ENCODE measurements at regions of chr20 and their contacts with region 1.

Region 1: GRCh38 chr20:38434743-38435554 is at the start of gene SNHG17:
- DNase-seq: peak; percentile 97
- H3K4me3 ChIP-seq: peak within 1 kb of the TSS; percentile 73
- H3K4me3 Mint-ChIP-seq: peak within 1 kb of the TSS; percentile 94
- H3K27ac Mint-ChIP-seq: peak within 1 kb of the TSS; percentile 95
- H3K4me1 ChIP-seq: peaks cover 10% of the 10 kb centered on the region
- H3K4me1 Mint-ChIP-seq: peaks cover 16% of the 10 kb centered on the region
- H3K27me3 ChIP-seq: no peaks in the 10 kb centered on the region
- H3K27me3 Mint-ChIP-seq: peaks cover 6% of the 10 kb centered on the region
- CTCF ChIP-seq: peak; percentile 100
- total RNA-seq, gene SNHG17: 351 and 362 TPM in 2 replicates

Region 2: DNA sequence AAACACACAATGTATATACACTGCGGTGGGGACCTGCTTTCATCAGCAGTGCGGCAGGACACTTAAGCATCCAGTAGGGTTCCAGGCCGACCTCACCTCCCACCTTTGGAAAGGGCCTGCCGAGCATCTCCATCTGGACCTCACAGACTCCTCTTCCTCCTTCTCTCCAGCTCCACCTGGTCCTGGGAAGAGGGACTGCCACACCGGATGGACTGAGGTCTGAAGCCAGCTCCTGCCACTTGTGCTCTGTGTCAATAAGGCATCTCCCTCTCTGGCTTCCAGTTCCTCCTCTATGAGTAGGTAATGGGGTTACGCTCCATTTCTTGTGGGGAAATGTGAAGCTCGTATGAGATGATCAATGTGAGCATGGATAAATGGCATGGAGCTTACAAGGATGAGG is 933.0 kb before region 1 on chr20:
- CTCF ChIA-PET with region 1: interaction called, 10 read pairs
- POLR2A ChIA-PET with region 1: no interaction called
- intact Hi-C with region 1: no loop called
- DNase-seq: peak; percentile 58 to 74
- H3K4me3 ChIP-seq: no peak overlapping the region
- H3K4me3 Mint-ChIP-seq: no peak overlapping the region
- H3K27ac Mint-ChIP-seq: no peak overlapping the region
- H3K4me1 ChIP-seq: peaks cover 7% of the 10 kb centered on the region
- H3K4me1 Mint-ChIP-seq: no peaks in the 10 kb centered on the region
- H3K27me3 ChIP-seq: no peaks in the 10 kb centered on the region
- H3K27me3 Mint-ChIP-seq: no peaks in the 10 kb centered on the region
- CTCF ChIP-seq: peak in 1 of 2 experiments; percentile 49

Region 3: DNA sequence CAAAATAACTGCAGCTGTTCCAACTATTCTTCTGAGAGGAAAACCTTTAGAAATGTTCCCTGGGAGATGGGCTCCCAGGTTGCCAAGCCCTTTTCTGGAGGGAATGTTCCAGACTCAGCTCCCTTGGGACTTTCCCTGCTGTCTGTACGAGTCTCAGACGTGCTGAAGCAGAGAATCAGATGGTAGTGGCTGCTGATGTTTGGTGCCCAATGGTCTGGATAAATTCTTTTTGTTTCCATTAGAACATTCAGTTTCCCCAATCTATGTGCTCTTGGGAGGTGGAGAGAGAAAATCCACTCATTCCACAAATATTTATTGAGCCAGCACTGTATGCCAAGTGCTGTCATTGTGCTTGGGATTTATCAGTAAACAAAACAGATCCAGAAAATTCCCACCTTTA is 39.8 kb before region 1 on chr20:
- CTCF ChIA-PET with region 1: no interaction called
- POLR2A ChIA-PET with region 1: no interaction called
- intact Hi-C with region 1: no loop called
- DNase-seq: no peak
- H3K4me3 ChIP-seq: no peak overlapping the region
- H3K4me3 Mint-ChIP-seq: no peak overlapping the region
- H3K27ac Mint-ChIP-seq: no peak overlapping the region
- H3K4me1 ChIP-seq: no peaks in the 10 kb centered on the region
- H3K4me1 Mint-ChIP-seq: no peaks in the 10 kb centered on the region
- H3K27me3 ChIP-seq: no peaks in the 10 kb centered on the region; the same call in 1 of the 2 replicates
- H3K27me3 Mint-ChIP-seq: no peaks in the 10 kb centered on the region
- CTCF ChIP-seq: no peak

Region 4: DNA sequence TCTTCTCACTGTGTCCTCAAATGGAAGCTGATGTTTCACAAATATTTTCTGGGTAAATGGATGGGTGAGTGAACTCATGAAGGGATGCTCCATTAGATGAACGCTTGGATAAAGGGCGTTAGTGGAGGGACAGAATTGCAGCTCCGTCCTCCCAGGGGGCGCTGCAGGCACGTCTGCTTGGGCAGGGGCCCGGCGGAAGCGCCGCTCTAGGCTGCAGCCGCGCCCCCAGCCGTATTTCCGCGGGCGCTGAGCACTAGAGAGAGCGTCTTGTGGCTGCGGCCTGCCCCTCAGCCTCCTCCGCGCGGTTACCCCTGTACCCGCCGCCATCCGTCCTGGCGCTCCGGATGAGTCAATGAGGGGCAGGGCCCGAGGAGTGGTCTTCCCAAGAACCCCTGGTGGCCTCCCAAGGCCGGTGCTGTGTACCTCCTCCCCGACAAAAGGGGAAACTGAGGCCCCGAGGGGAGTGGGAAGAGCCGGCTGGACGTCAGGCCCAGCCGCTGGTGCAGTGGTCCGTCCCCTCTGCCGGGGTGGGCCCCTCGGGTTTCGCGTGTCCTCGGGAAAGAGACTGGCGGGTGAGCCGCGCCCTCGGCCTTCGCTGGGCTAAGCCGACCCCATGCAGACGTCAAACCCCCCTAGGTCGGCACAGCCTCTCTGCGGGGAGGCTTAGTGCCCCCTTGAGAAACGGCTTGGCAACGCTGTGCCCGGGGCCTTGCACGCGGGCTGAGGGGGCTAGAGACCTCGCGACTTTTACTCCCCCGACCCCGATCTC is 11.7 kb after region 1 on chr20:
- CTCF ChIA-PET with region 1: interaction called, 91 read pairs
- POLR2A ChIA-PET with region 1: interaction called, 101 read pairs
- intact Hi-C with region 1: loop called (anchors 1 kb)
- DNase-seq: peak; percentile 96 to 100
- H3K4me3 ChIP-seq: peak overlapping the region; percentile 70
- H3K4me3 Mint-ChIP-seq: peak overlapping the region; percentile 81
- H3K27ac Mint-ChIP-seq: peak overlapping the region; percentile 63
- H3K4me1 ChIP-seq: peaks cover 14% of the 10 kb centered on the region
- H3K4me1 Mint-ChIP-seq: peaks cover 19% of the 10 kb centered on the region
- H3K27me3 ChIP-seq: no peaks in the 10 kb centered on the region
- H3K27me3 Mint-ChIP-seq: peaks cover 6% of the 10 kb centered on the region
- CTCF ChIP-seq: peak; percentile 99 to 100

Region 5: DNA sequence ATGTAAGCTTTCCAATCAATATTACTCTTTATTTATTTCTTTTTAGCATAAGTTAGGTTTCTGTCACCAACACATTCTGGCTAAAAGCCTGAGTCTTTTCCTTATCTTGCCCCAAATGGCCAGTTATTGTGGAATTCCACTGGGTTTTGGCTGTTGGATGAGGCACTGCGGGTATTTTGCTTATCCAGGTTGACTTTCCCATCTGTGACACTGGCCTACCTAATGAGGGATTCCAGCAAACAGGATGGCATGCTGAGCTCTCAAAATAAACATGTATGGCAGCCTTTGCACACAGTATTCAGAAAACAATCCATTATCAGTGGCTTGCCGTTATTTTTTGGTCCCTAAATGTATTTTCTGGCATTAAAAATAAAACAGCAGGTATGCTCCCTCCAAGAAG is 31.2 kb after region 1 on chr20:
- CTCF ChIA-PET with region 1: no interaction called
- POLR2A ChIA-PET with region 1: no interaction called
- intact Hi-C with region 1: no loop called
- DNase-seq: peak in 1 of 2 experiments; percentile 10
- H3K4me3 ChIP-seq: no peak overlapping the region
- H3K4me3 Mint-ChIP-seq: no peak overlapping the region
- H3K27ac Mint-ChIP-seq: no peak overlapping the region
- H3K4me1 ChIP-seq: no peaks in the 10 kb centered on the region
- H3K4me1 Mint-ChIP-seq: peaks cover 3% of the 10 kb centered on the region
- H3K27me3 ChIP-seq: no peaks in the 10 kb centered on the region
- H3K27me3 Mint-ChIP-seq: no peaks in the 10 kb centered on the region
- CTCF ChIP-seq: no peak

Measured in Caco-2 (cell line).